Naive thymus-derived CD8-positive, alpha-beta T cell (primary cell): ENCODE measurements at regions of chr17 and their contacts with region 1.

Region 1: GRCh38 chr17:19648475-19649406 is at the start of gene ALDH3A2:
- DNase-seq: peak; percentile 89 to 96 (median 90)
- ATAC-seq: peak; percentile 94 to 95
- H3K4me3 Mint-ChIP-seq: peak within 1 kb of the TSS; percentile 91 to 98 (median 96)
- H3K27ac Mint-ChIP-seq: peak within 1 kb of the TSS; percentile 93 to 98 (median 96)
- H3K4me1 Mint-ChIP-seq: peaks cover 23 to 57% (median 36%) of the 10 kb centered on the region in 4 donors
- H3K27me3 Mint-ChIP-seq: no peaks in the 10 kb centered on the region
- polyA plus RNA-seq, gene ALDH3A2: 20.6 to 23.6 (median 22.0) TPM

Region 2: DNA sequence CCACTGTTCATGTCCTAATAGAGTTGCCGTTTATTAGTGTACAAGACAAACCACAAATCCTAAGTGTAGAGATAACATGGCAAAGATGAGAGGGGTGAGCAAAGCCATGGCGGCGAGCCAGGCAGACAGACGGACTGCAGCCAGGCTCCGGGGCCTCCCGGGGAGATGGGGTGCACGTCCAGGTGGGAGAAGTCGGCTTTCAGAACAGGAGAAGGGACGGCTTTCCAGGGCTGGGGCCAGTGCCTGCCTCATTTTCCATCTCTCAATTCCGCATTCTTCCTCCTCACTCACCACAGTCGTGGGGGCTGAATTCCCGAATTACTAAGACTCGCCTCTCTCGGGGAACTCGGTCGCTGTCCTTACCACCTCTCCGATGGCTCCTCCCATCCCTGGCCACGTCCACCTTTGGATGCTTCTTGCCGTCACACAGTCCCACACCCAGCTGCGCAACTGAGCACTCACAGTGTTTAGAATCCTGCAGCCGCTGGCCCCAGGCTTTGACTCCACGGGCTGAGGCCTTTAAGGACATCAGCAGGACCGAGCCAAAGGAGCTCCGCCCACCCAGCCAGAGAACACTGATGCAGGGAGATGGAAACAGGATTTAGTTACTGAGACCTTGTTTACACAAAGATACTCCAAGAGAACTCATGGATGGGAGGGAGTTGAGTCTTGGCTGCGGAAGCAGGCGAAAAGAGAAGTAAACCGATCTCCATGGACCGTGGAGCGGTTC is 178.0 kb before region 1 on chr17:
- POLR2A ChIA-PET with region 1: interaction called, 10 read pairs
- DNase-seq: peak in 1 of 10 donors; percentile 2
- ATAC-seq: no peak
- H3K4me3 Mint-ChIP-seq: no peak overlapping the region
- H3K27ac Mint-ChIP-seq: peak overlapping the region in 1 of 10 donors; percentile 49
- H3K4me1 Mint-ChIP-seq: peaks cover 0 to 2% (median 0%) of the 10 kb centered on the region in 4 donors
- H3K27me3 Mint-ChIP-seq: peaks cover 2 to 11% (median 5%) of the 10 kb centered on the region in 5 donors

Region 3: GRCh38 chr17:19569785-19570543 is 78.8 kb before region 1 on chr17:
- POLR2A ChIA-PET with region 1: no interaction called
- DNase-seq: no peak
- ATAC-seq: no peak
- H3K4me3 Mint-ChIP-seq: no peak overlapping the region
- H3K27ac Mint-ChIP-seq: peak overlapping the region in 1 of 10 donors; percentile 67
- H3K4me1 Mint-ChIP-seq: peaks cover 0 to 8% (median 3%) of the 10 kb centered on the region in 4 donors
- H3K27me3 Mint-ChIP-seq: peaks cover 1 to 11% (median 6%) of the 10 kb centered on the region in 5 donors

Region 4: GRCh38 chr17:19744922-19745757 is 96.4 kb after region 1 on chr17:
- POLR2A ChIA-PET with region 1: interaction called, 28 read pairs
- DNase-seq: peak; percentile 73 to 91 (median 84)
- ATAC-seq: peak; percentile 98
- H3K4me3 Mint-ChIP-seq: peak overlapping the region; percentile 36 to 88 (median 72)
- H3K27ac Mint-ChIP-seq: peak overlapping the region in 4 of 10 donors; percentile 9 to 59 (median 38)
- H3K4me1 Mint-ChIP-seq: peaks cover 0 to 12% (median 5%) of the 10 kb centered on the region in 4 donors
- H3K27me3 Mint-ChIP-seq: peaks cover 0 to 18% (median 8%) of the 10 kb centered on the region in 5 donors

Region 5: GRCh38 chr17:19762515-19762961 is 113.8 kb after region 1 on chr17:
- POLR2A ChIA-PET with region 1: interaction called, 16 read pairs
- DNase-seq: peak in 9 of 10 donors; percentile 43 to 85 (median 59)
- ATAC-seq: peak; percentile 68 to 85
- H3K4me3 Mint-ChIP-seq: no peak overlapping the region
- H3K27ac Mint-ChIP-seq: no peak overlapping the region
- H3K4me1 Mint-ChIP-seq: peaks cover 3 to 19% (median 12%) of the 10 kb centered on the region in 4 donors
- H3K27me3 Mint-ChIP-seq: peaks cover 3 to 11% (median 8%) of the 10 kb centered on the region in 5 donors